HEK293 (cell line): ENCODE measurements at regions of chr2 and their contacts with region 1.

Region 1: DNA sequence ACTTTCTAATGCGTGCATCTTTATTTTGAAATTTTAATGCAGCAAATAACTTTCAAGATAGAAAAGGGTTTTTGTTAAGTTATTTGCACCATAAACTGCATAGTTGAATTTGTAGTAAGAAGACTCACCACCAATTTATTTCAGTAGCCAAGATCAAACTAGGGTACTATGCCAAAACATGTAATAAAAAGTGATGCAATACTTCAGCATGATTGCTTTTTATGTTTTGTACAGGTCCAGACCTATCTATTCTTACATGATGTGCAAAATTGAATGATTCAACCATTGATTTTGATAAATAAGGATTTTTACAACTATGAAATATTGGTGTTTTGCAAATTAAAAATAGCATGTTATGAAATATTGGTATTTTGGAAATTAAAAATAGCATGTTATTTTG is 26.7 kb downstream of the AGPS start:
- H3K4me3 ChIP-seq: no peak overlapping the region
- H3K27ac ChIP-seq: no peak overlapping the region
- H3K4me1 ChIP-seq: no peaks in the 10 kb centered on the region; the same call in 1 of the 2 replicates
- CTCF ChIP-seq: no peak

Region 2: DNA sequence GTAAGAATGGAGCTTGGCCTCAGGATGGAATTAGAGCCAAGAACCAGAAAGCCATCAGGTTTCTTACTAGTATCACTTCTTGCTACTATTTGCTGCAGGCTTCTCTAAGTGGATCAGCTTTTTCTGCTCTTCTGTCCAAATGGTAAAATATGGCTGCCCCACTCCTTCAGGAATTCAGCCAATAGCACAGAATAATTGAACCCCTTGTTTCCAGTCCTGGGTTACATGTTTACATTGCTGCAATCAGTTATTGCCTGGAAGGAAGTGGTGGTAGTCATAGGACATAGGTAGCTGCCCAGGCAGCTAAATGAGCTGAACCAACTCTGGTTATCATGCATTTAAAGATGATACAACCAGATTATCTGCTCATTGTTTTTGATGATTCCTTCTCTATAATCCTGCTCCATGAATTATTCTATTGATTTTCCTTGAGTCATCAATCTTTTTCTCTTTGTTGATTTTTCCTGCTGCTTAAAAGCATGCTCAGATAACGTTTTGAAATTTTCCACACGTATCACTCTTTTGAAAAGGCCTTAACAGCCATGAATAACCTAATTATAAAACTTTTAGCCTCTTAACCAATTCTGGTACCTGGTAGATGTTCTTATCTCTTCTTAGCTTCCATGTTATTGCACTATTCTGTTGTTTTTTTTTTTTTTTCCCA is 14.1 kb before region 1 on chr2:
- CTCF ChIA-PET with region 1: interaction called, 18 read pairs
- POLR2A ChIA-PET with region 1: no interaction called
- H3K4me3 ChIP-seq: no peak overlapping the region
- H3K27ac ChIP-seq: no peak overlapping the region
- H3K4me1 ChIP-seq: peaks cover 13% of the 10 kb centered on the region
- CTCF ChIP-seq: no peak